ENCODE measurements at regions of chr10 and their contacts with region 1.

Region 1: GRCh38 chr10:79184145-79184625 is 115.4 kb downstream of the ZMIZ1 start:
- DNase-seq: peak in 1 of 3 donors; percentile 54
- ATAC-seq: peak in 1 of 2 donors; percentile 28
- H3K4me3 ChIP-seq: no peak overlapping the region
- H3K27ac ChIP-seq: peak overlapping the region; percentile 75
- H3K4me1 ChIP-seq: peaks cover 51% of the 10 kb centered on the region
- H3K27me3 ChIP-seq: no peaks in the 10 kb centered on the region

Region 2: DNA sequence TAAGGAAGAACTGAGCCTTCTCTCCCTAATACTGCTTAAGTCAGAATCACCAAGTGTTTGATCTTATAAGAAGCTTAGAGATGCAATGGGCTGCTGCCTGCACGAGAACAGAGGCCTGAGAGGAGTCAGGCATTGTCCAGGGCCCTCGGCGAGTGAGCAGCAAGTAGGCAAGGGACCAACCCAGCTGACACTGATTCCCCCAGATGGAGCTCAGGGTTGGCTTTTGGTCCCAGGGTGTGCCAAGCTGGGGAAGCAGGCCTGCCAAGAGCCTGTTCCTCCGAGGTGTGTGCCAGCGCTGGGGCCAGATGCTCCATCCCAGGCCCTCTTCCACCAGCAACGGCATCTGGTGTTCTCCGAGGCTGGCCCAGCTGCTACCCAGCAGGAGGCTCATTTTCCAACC is 337.4 kb before region 1 on chr10:
- intact Hi-C with region 1: no loop called
- DNase-seq: peak in 2 of 3 donors; percentile 64 to 76
- ATAC-seq: peak; percentile 67 to 73
- H3K4me3 ChIP-seq: no peak overlapping the region
- H3K27ac ChIP-seq: no peak overlapping the region
- H3K4me1 ChIP-seq: no peaks in the 10 kb centered on the region
- H3K27me3 ChIP-seq: no peaks in the 10 kb centered on the region

Region 3: GRCh38 chr10:79149662-79150443 is 34.3 kb before region 1 on chr10:
- intact Hi-C with region 1: loop called in 1 of 4 experiments (anchors 5 kb)
- DNase-seq: peak; percentile 94 to 96 (median 95)
- ATAC-seq: peak; percentile 62 to 76
- H3K4me3 ChIP-seq: no peak overlapping the region
- H3K27ac ChIP-seq: peak overlapping the region; percentile 97
- H3K4me1 ChIP-seq: peaks cover 77% of the 10 kb centered on the region
- H3K27me3 ChIP-seq: no peaks in the 10 kb centered on the region

Region 4: GRCh38 chr10:79316671-79317431 is 132.7 kb after region 1 on chr10:
- intact Hi-C with region 1: no loop called
- DNase-seq: peak; percentile 11 to 60 (median 59)
- ATAC-seq: peak; percentile 6 to 8
- H3K4me3 ChIP-seq: no peak overlapping the region
- H3K27ac ChIP-seq: no peak overlapping the region
- H3K4me1 ChIP-seq: peaks cover 6% of the 10 kb centered on the region
- H3K27me3 ChIP-seq: no peaks in the 10 kb centered on the region

Measured in right cardiac atrium (tissue), 5 donors.